Tibial artery (tissue), 4 donors: ENCODE measurements at regions of chr15 and their contacts with region 1.

Region 1: DNA sequence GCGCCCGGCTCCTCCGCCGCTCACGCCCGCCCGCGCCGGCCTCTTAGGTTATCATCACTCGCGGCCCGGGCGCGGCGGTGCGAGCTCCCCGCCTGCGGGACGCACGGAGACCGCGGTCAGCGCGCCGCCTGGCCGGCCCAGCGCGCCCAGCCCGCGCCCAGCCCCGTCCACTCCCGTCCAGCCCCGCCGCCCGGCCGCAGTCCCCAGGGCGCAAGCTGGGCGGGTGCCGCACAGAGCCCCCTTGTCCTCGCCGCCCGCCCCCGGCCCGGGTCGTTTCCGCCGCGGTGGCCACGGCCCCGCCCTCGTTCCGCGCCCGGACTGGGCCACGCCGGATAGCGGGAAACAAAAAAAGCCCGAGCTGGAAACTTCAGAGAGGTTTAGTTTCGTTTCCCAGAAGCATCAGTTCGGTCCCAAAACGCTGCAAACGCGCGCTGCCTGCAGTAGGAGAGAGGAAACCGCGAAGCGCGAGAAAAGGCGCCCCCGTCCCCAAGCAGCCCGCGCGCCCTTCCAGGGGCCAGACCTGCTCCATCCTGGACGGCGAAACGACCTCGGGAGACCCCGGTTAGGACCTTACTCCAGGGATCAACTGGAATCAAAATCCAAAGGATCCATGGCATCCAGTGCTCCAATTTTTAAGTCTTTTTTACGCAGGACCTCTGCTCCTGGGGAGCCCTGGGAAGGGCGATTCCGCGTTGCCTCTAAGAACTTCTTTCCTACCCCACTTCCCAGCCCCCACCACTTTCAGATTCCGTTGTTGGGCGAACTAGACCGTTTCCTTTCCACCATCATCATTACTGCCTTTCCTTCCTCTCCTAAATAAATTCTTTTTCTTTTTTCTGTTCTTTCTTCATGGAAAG is at the start of gene ATP10A:
- DNase-seq: peak; percentile 59 to 78
- H3K4me3 ChIP-seq: peak within 1 kb of the TSS; percentile 82 to 88
- H3K27ac ChIP-seq: peak within 1 kb of the TSS; percentile 96
- H3K4me1 ChIP-seq: peaks cover 0 to 38% (median 27%) of the 10 kb centered on the region in 4 donors
- H3K27me3 ChIP-seq: no peaks in the 10 kb centered on the region
- CTCF ChIP-seq: no peak

Region 2: GRCh38 chr15:25739687-25740121 is 123.6 kb before region 1 on chr15:
- intact Hi-C with region 1: loop called (anchors 2 kb)
- DNase-seq: no peak
- H3K4me3 ChIP-seq: no peak overlapping the region
- H3K27ac ChIP-seq: no peak overlapping the region
- H3K4me1 ChIP-seq: peaks cover 0 to 95% (median 72%) of the 10 kb centered on the region in 4 donors
- H3K27me3 ChIP-seq: no peaks in the 10 kb centered on the region
- CTCF ChIP-seq: peak; percentile 29 to 40

Region 3: DNA sequence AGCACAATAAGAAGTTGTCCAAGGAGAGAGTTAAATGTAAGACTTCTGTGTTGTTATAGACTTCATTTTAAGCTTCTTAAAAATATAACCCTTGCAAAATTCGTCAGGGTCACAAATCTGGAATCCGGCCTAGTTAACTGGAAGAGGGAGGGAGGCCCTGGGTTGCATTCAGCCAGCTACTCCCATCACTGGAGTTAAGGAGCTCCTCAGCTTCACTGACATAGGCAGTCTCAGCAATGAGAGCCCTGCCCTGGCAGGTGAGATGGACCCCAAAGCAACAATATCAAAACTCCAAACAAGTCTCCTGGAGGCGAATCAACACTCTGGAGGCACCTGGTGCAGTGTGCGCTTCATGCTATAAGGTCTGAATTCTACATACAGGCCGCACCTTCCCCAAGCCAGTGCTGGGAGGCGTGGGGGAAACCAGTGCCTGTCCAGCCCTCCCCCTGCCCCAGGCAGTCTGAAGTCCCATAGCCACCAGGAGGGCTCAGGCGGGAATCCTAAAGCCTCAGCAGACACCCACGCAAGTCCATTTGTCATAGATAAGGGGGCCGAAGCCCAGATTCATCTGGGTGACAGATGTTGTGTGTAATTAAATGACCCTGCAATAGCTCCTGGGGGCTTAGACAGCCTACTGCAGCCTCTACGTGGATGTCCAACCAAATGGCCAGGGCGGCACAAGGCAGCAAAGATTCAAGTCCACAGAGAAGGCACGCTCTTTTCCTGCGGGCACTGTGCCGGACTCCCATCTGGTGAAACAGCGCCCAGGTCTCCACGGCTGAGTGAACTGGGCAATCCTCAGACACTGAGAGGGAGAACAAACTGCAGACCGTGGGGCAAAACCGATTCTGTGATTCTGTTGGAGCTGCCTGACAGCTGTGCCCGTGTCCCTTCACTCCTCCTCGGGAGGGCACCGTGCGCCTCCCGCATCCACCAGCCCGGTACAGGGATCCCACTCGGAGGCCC is 65.1 kb before region 1 on chr15:
- intact Hi-C with region 1: loop called (anchors 5 kb)
- DNase-seq: peak in 1 of 2 donors; percentile 72
- H3K4me3 ChIP-seq: no peak overlapping the region
- H3K27ac ChIP-seq: peak overlapping the region; percentile 79 to 89
- H3K4me1 ChIP-seq: peaks cover 0 to 100% (median 61%) of the 10 kb centered on the region in 4 donors
- H3K27me3 ChIP-seq: no peaks in the 10 kb centered on the region
- CTCF ChIP-seq: no peak

Region 4: DNA sequence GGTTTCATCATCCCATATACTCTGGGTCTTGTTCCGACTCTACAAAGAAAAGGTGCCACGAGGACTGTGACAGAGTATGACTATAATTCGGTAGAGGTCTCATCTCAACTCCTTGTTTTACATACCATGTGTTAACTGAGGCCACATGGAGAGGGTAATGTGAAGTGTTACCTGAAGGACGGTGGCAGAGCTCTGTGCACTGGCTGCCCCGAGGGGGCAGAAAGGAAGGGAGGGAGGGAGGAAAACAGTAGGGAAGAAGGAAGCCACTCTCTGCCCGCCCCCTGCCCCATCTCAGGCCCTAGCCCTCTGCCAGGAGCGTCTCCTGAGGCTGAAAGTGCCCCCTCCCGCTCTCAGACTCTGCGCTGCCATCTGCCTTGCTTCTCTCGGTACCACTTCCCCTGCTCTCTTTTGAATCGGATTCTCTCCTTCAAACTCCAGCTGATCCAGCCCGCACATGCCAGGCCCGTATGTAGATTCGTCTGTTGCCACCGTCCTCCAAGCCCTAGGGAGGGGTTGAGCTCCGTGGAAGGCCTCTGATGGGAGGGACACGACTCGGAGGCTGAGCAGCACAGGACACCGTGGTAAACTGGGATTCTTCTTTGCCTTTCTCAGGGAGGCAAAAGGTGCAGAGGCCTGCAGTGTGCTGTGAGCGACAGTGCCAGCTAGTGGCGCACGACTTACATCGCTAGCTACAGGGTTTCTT is 70.3 kb after region 1 on chr15:
- intact Hi-C with region 1: loop called (anchors 10 kb)
- DNase-seq: peak; percentile 69 to 88
- H3K4me3 ChIP-seq: peak overlapping the region; percentile 27 to 36
- H3K27ac ChIP-seq: peak overlapping the region; percentile 42 to 55
- H3K4me1 ChIP-seq: peaks cover 0 to 10% (median 6%) of the 10 kb centered on the region in 4 donors
- H3K27me3 ChIP-seq: no peaks in the 10 kb centered on the region
- CTCF ChIP-seq: peak; percentile 67 to 73